Activated T-helper 2 cell treated with anti-CD3 and anti-CD28 coated beads, Interferon-gamma antibody, Interleukin-2, Interleukin-4, amounts not matched to agents 10 μg/mL and 5 μg/mL and 100 μg/mL, durations not matched to agents 14 hours and 24 hours and 36 hours (primary cell): ENCODE measurements at regions of chr19 and their contacts with region 1.

Region 1: GRCh38 chr19:3471954-3472655 is 8.2 kb downstream of the SMIM24 start:
- DNase-seq: no peak
- H3K4me3 Mint-ChIP-seq: no peak overlapping the region
- H3K27ac Mint-ChIP-seq: no peak overlapping the region
- H3K4me1 Mint-ChIP-seq: no peaks in the 10 kb centered on the region
- H3K27me3 Mint-ChIP-seq: no peaks in the 10 kb centered on the region

Region 2: DNA sequence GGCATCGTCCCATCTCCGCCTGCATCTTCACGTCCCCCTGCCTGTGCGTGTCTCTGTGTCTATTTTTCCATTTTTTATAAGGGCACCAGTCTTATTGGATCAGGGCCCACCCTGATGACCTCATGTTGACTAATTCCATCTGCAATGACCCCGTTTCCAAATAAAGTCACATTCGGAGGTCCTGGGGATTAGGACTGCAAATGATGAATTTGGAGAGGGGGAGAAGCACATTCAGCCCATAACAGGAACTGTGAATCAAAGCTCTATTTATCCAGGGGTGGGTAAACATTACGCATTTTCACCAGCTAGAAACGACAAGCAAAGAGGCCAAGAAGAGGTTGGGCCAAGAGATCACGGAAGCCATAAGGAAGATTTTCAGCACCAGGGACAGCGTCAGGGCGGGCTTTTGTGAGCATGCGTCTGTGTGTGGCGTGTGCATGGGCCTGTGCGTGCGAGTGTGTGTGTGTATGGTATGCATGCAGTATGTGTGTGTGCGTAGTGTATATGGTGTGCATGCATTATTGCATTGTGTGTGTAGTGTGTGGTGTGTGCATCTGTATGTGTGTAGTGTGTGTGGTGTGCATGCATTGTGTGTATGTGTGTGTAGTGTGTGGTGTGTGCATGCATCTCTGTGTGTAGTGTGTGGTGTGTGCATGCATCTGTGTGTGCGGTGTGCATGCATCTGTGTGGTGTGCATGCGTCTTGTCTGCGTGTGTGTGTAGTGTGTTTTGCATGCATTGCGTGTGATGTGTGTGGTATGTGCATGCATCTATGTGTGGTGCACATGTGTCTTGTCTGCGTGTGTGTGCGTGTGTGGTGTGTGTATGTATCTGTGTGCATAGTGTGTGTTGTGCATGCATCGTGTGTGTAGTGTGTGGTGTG is 228.0 kb before region 1 on chr19:
- intact Hi-C with region 1: no loop called
- DNase-seq: peak; percentile 46
- H3K4me3 Mint-ChIP-seq: no peak overlapping the region
- H3K27ac Mint-ChIP-seq: no peak overlapping the region
- H3K4me1 Mint-ChIP-seq: no peaks in the 10 kb centered on the region
- H3K27me3 Mint-ChIP-seq: no peaks in the 10 kb centered on the region

Region 3: DNA sequence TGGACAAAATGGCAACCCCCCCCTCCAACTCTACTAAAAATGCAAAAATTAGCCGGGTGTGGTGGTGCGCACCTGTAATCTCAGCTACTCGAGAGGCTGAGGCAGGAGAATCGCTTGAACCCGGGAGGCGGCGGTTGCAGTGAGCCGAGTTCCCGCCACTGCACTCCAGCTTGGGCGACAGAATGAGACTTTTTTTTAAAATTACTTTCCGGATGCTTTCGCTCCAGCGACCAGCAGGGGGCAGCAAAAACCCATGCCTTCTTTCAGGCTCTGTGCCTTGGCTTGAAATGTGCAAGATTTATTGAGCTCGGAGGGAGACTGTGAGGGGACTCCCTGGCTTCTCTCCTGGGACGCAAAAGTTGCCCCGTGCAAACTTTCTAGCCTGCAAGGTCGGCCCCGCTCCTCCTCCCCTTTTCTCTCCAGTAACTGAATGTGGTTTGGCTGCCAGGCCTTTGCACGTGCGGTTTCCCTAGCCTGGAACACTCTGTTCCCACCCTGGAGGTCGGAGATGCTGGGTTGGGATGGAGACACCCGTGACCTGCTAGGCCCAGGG is 167.2 kb before region 1 on chr19:
- intact Hi-C with region 1: loop called (anchors 5 kb)
- DNase-seq: peak; percentile 68
- H3K4me3 Mint-ChIP-seq: no peak overlapping the region
- H3K27ac Mint-ChIP-seq: no peak overlapping the region
- H3K4me1 Mint-ChIP-seq: no peaks in the 10 kb centered on the region
- H3K27me3 Mint-ChIP-seq: peaks cover 8% of the 10 kb centered on the region

Region 4: GRCh38 chr19:3324321-3324856 is 147.7 kb before region 1 on chr19:
- intact Hi-C with region 1: loop called (anchors 2 kb)
- DNase-seq: peak; percentile 54
- H3K4me3 Mint-ChIP-seq: no peak overlapping the region
- H3K27ac Mint-ChIP-seq: no peak overlapping the region
- H3K4me1 Mint-ChIP-seq: no peaks in the 10 kb centered on the region
- H3K27me3 Mint-ChIP-seq: peaks cover 4% of the 10 kb centered on the region

Region 5: DNA sequence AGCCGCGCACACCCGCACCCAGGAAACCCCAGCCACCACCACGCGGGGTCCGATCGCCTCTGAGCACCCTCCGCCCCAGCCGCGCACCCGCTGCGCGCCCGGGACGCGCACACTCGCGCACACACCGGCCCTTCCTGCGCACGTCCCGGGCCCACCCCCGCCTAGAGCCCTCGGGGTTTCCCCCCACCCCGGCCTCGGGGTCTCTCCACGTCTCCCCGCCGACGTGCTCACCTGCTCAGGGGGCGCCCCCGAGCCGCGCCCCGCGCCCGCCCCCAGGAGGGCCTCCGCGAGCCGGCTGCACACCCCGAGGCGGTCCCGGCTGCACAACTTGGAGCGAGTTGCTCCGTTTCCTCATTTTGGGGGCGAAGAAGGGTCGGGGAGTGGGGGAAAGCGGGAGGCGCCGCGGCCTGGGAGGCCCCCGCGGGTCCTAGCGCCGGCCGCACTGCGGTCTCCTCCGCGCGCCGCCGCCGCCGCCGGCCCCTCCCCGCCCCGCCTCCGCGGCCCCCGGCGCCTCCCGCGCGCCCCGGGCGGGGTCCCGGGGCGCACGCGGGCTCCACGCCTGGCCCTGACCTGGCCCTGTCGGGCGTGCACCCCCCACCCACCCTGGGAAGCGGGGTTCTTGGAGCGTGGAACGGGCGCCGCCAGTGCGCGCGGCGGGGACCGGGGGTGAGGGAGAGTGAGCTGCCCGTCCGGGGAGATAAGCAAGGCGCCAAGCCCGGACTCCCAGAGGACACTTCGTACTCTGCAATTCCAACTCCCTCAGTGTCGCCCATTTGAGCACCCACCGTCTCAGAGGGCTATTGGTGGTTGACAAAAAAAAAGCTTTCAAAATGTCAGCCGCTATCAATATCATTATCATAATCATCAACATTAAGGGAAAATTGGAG is 314.1 kb after region 1 on chr19 and contains the start of gene MATK:
- intact Hi-C with region 1: no loop called
- DNase-seq: no peak
- H3K4me3 Mint-ChIP-seq: peak within 1 kb of the TSS; percentile 79
- H3K27ac Mint-ChIP-seq: no peak within 1 kb of the TSS
- H3K4me1 Mint-ChIP-seq: peaks cover 7% of the 10 kb centered on the region
- H3K27me3 Mint-ChIP-seq: peaks cover 4% of the 10 kb centered on the region
- total RNA-seq, gene MATK: 25.4 and 27.5 TPM in 2 replicates